ENCODE measurements at regions of chr10 and their contacts with region 1.

Region 1: DNA sequence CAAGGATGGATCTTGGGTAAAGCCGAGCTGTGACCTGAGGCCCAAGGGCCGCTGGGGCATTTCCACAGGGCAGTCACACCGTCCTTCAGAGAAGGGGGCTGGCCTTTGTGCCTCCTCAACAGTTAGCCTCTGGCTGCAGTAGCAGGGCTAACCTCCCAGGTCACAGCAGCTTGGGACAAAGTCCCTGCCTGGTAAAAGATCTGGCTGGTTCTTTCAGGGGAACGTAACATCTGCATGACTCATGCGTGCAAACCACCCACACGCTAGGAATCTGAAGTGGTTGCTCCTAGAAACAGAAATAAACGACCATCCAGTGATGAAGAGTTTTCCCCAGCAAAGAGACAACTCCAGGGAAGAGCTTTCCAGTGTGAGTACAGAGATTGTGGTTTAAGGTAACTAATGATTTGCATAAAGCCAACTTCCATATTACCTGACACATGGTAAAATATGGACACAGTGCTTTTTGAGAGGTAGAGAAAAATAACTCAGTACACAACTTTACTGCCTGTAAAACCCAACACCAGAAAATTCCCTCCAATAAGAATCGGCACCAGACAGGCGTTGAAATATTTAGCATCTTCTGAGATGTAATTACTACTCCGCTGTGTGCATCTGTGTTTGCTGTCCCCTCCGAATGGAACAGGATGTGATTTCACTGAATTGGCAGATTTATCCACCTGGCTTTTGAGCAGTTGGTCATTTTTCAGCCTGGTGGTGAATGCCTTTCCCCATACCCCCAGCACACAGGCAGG is 84.9 kb upstream of the ADRB1 start:
- DNase-seq: no peak
- H3K4me3 ChIP-seq: no peak overlapping the region
- H3K27ac ChIP-seq: peak overlapping the region; percentile 88
- H3K4me1 ChIP-seq: peaks cover 51% of the 10 kb centered on the region
- CTCF ChIP-seq: no peak

Region 2: GRCh38 chr10:114024876-114025610 is 66.2 kb after region 1 on chr10:
- CTCF ChIA-PET with region 1: interaction called, 3 read pairs
- POLR2A ChIA-PET with region 1: interaction called, 9 read pairs
- intact Hi-C with region 1: loop called (anchors 1 kb)
- DNase-seq: peak; percentile 91
- H3K4me3 ChIP-seq: peak overlapping the region; percentile 56
- H3K27ac ChIP-seq: peak overlapping the region; percentile 67
- H3K4me1 ChIP-seq: peaks cover 36% of the 10 kb centered on the region
- CTCF ChIP-seq: no peak

Measured in OCI-LY7 (cell line).